AG04449 (cell line): ENCODE measurements at regions of chr12 and their contacts with region 1.

Region 1: GRCh38 chr12:116717466-116718437 is 20.1 kb downstream of the SPRING1 start:
- DNase-seq: no peak
- H3K4me3 ChIP-seq: no peak overlapping the region
- CTCF ChIP-seq: no peak

Region 2: DNA sequence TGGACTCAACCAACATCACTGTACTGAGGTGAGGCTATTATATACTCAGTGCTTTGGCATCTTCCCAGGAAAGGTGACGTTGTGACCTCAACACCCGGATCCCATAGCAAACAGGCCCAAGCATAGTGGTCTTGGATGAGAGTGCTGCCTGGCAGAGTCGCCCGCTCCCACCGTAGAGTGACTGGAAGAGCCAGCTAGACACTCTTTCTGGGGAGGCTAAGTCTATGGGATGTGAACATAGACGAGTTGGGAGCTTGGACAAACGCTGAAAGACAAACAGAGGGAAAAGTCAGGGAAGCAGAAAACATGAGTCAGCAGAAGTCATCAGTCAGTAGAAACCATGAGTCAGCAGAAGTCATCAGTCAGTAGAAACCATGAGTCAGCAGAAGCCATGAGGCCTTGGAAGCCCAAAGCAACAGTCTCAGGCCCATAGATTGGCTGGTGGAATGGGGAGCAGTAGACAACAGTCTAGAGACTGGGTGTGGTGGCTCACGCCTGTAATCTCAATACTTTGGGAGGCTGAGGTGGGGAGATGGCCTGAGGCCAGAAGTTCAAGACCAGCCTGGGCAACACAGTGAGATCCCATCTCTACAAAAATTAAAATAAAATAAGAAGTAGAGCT is 224.9 kb before region 1 on chr12:
- CTCF ChIA-PET with region 1: no interaction called
- POLR2A ChIA-PET with region 1: no interaction called
- DNase-seq: no peak
- H3K4me3 ChIP-seq: no peak overlapping the region
- CTCF ChIP-seq: no peak

Region 3: GRCh38 chr12:116631619-116632018 is 86.1 kb before region 1 on chr12:
- CTCF ChIA-PET with region 1: no interaction called
- POLR2A ChIA-PET with region 1: no interaction called
- DNase-seq: no peak
- H3K4me3 ChIP-seq: no peak overlapping the region
- CTCF ChIP-seq: no peak

Region 4: DNA sequence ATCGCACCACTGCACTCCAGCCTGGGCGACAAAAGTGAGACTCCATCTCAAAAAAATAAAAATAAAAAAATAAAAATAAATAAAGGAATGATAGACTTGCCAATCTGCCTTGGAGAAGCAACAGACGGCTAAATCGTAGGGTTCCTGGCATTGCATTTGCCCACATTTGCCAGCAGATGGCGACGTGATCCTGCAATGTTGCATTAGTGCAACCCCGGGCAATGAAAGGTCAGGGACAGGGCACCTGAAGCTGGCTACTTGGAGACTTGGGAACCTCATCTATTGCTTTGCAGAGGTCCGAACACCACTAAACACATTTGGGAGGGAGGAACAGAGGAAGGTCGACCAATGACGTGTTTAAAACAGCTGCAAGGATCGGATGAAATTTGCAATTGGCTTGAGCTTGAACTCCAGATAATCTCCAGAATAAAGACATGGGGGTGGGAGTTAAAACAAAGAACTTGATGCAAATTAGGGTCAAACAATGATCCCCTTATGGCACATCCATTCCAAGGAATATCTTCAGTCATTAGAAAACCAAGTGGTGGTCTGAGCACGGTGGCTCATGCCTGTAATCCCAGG is 14.4 kb before region 1 on chr12:
- CTCF ChIA-PET with region 1: interaction called, 36 read pairs
- POLR2A ChIA-PET with region 1: no interaction called
- DNase-seq: no peak
- H3K4me3 ChIP-seq: no peak overlapping the region
- CTCF ChIP-seq: peak; percentile 93

Region 5: GRCh38 chr12:116737774-116738700 is 20.3 kb after region 1 on chr12 and contains the starts of genes RNFT2 and SPRING1:
- CTCF ChIA-PET with region 1: no interaction called
- POLR2A ChIA-PET with region 1: no interaction called
- DNase-seq: peak; percentile 96
- H3K4me3 ChIP-seq: peak within 1 kb of the TSS; percentile 91
- CTCF ChIP-seq: no peak